Heart right ventricle (tissue), 16 donors: ENCODE measurements at regions of chr9 and their contacts with region 1.

Region 1: DNA sequence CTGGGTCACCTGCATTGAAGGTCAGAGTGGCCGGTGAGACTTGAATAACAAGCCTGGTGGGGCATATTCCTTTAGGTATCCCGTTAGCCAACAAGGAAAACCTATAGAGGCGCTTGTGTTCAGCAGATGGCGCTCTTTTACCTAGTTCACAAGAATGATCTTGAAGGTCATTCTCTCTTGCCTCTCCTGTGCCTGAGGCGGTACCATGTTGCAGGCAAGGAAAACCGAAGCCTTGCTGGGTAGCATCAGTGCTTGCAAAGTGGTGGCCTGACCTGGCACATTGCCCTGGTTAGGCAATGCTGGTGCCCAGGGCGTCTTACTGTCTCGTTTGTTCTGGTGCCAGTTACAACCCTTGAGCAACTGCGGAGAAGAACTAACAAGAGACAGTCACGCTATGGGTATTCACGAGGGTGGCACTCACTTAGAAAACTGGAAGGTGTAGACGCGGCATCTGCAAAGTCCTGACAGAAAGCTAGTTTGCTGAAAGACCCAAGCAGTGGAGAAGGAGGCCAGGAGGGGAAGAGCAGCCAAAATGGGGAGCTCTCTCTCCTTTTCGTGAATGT is 56.7 kb downstream of the AOPEP start:
- DNase-seq: peak; percentile 34 to 86
- ATAC-seq: peak; percentile 79 to 88 (median 83)
- H3K4me3 ChIP-seq: no peak overlapping the region
- H3K27ac ChIP-seq: peak overlapping the region in 9 of 10 donors; percentile 1 to 88 (median 82)
- H3K4me1 ChIP-seq: peaks cover 0 to 41% (median 23%) of the 10 kb centered on the region in 9 donors
- H3K27me3 ChIP-seq: no peaks in the 10 kb centered on the region
- CTCF ChIP-seq: peak; percentile 44 to 87 (median 73)

Region 2: DNA sequence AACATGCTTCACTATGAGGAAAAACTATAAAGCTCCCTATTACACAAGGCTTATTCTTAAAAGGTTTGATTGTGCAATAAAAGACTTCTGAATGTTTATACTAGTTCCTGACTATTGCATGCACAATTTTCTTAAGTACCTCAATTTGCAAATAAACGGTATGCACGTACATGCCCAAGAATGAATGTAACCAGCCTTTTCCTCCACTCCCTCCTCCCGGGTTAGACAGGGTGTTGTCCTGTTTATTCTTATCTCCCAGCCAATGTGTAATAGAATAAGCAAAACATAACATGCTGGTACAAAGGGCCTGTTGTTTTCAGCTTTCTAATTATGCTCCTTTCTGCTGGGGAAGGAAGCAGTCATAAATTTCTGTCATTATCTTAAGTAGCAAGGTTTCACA is 22.4 kb after region 1 on chr9:
- intact Hi-C with region 1: no loop called
- DNase-seq: no peak
- ATAC-seq: peak in 5 of 8 donors; percentile 15 to 55 (median 30)
- H3K4me3 ChIP-seq: no peak overlapping the region
- H3K27ac ChIP-seq: peak overlapping the region in 7 of 10 donors; percentile 7 to 73 (median 50)
- H3K4me1 ChIP-seq: peaks cover 16 to 67% (median 44%) of the 10 kb centered on the region in 9 donors
- H3K27me3 ChIP-seq: no peaks in the 10 kb centered on the region
- CTCF ChIP-seq: no peak

Region 3: DNA sequence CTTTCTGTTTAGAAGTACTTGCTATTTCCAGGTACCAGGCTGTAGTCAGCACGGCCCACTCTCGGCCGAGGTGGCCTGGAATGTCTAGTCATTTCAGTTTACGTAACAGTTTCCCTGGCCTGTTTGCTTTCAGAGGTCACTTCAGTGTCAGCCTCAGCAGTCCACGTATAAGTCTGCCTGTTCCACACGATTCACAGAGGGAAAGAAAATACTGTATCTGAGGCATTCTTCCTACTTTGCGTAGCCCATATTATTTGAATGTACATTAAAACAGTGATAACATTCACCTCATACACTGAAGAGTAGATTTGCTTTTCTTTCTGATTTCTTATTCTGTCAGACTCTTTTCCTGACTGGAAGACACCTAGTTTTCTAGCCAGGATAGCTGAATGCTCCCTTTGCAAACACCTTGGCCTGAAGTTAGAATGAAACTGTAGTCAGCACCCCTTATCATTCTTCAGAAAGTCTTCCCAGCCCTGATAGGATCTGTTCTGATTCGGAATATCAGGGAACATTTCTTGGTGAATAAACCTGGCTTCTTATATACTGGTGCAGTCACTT is 84.2 kb after region 1 on chr9:
- intact Hi-C with region 1: loop called in 1 of 10 experiments (anchors 5 kb)
- DNase-seq: peak; percentile 59 to 78
- ATAC-seq: peak; percentile 81 to 89 (median 86)
- H3K4me3 ChIP-seq: peak overlapping the region in 4 of 10 donors; percentile 1 to 27 (median 8)
- H3K27ac ChIP-seq: peak overlapping the region; percentile 78 to 97 (median 89)
- H3K4me1 ChIP-seq: peaks cover 10 to 85% (median 74%) of the 10 kb centered on the region in 9 donors
- H3K27me3 ChIP-seq: no peaks in the 10 kb centered on the region
- CTCF ChIP-seq: no peak

Region 4: GRCh38 chr9:95004411-95005277 is 221.5 kb after region 1 on chr9:
- intact Hi-C with region 1: loop called in 7 of 10 experiments (anchors 2 to 5 kb)
- DNase-seq: peak; percentile 66 to 67
- ATAC-seq: peak; percentile 18 to 60 (median 29)
- H3K4me3 ChIP-seq: peak overlapping the region; percentile 68 to 91 (median 82)
- H3K27ac ChIP-seq: peak overlapping the region; percentile 96 to 100 (median 99)
- H3K4me1 ChIP-seq: peaks cover 2 to 71% (median 32%) of the 10 kb centered on the region in 9 donors
- H3K27me3 ChIP-seq: peaks cover 0 to 41% (median 0%) of the 10 kb centered on the region in 7 donors
- CTCF ChIP-seq: no peak

Region 5: DNA sequence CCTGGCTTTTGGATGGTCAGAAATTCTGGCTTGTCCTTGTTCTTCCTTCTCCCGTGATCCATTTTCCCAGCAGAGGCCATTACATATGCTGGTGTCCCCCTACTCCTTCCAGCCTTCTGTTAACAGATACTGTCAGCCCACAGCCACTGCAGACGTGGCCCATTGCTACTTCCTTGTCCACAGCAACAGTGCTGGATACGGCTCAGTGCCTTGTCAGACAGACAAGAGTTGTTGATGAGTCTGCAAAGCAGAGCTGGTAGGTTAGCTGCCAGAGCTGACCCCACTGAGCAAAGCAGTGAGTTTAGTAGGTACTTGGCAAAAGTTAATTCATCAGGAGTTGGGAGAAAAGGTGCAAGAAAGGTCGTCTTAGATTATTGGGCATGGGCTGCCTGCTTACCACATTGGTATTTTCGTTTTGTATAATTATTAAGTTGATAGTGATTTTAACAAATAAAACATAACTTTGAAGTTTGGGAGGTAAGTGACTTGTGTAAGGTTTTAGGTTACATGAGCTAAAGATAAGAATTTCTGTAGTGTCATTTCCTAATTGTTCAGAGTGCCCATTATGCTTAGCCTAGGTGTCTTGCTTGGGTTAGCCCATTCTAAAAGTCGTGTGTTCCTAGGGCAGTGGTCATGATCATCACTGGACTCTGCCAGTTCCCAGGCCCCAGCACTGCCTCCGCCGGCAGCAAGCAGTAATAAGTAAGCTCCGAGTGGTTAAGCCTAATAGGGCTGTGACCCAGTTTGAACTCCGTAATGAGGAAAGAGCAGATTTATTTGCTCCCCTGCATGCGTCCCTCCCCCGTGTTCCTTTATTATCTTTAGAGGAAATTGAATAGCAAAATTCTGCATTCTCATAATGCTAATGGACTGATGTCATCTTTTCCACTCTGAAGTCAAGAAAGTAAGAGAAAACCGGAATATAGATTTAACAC is 242.3 kb after region 1 on chr9:
- intact Hi-C with region 1: loop called in 2 of 10 experiments (anchors 5 to 10 kb)
- DNase-seq: peak; percentile 50 to 82
- ATAC-seq: peak; percentile 81 to 91 (median 86)
- H3K4me3 ChIP-seq: peak overlapping the region in 5 of 10 donors; percentile 6 to 20 (median 13)
- H3K27ac ChIP-seq: peak overlapping the region in 9 of 10 donors; percentile 2 to 87 (median 81)
- H3K4me1 ChIP-seq: peaks cover 21 to 100% (median 99%) of the 10 kb centered on the region in 9 donors
- H3K27me3 ChIP-seq: no peaks in the 10 kb centered on the region
- CTCF ChIP-seq: peak in 8 of 9 donors; percentile 26 to 61 (median 34)

Region 6: DNA sequence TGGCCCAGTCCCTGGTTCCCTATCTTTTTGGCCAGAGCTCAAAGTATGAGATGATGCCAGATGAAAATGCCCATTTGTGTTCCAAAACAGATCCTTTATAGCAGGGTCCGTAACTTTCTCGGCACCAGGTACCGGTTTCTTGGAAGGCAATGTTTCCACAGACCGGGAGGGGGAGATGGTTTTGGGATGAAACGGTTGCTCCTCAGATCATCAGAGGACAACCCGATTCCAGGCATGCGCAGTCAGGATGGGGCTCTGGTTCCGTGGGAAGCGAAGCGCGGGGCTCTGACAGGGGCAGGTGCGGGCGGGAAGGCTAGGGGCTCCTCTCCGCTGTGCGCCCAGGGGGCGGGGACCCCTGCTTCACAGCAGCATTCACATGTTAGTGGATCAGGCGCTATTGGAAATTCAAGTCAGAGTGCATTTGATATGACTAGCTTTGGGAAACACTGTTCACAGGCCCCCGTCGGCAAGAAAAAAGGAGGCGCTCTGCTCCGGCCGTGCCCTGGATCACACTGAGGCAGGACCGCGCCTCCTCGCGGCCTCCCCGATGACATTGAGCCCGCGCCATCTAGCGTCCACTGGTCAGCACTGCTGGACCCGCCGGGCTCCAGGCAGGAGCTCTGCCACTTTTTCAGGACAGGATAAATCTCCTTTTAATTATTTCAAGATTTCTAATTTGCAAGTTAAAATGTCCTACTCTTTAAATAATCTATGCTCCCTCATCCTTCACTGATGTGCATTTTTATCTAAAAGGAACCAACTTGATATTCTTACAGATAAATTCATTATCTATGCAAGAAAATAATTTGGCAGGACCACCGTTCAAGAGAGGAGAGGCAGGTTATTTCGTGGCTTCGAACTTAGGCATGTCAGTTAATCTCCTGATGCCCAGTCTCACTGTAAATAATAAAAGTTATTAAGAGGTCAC is 344.3 kb after region 1 on chr9:
- intact Hi-C with region 1: loop called (anchors 1 to 10 kb)
- DNase-seq: peak; percentile 86 to 87
- ATAC-seq: peak; percentile 83 to 94 (median 90)
- H3K4me3 ChIP-seq: peak overlapping the region in 9 of 10 donors; percentile 21 to 53 (median 43)
- H3K27ac ChIP-seq: peak overlapping the region in 1 of 10 donors; percentile 36
- H3K4me1 ChIP-seq: peaks cover 0 to 11% (median 6%) of the 10 kb centered on the region in 9 donors
- H3K27me3 ChIP-seq: no peaks in the 10 kb centered on the region
- CTCF ChIP-seq: peak; percentile 92 to 100 (median 98)